Right ventricle myocardium inferior (tissue), 1 donor: ENCODE measurements at regions of chr17 and their contacts with region 1.

Region 1: DNA sequence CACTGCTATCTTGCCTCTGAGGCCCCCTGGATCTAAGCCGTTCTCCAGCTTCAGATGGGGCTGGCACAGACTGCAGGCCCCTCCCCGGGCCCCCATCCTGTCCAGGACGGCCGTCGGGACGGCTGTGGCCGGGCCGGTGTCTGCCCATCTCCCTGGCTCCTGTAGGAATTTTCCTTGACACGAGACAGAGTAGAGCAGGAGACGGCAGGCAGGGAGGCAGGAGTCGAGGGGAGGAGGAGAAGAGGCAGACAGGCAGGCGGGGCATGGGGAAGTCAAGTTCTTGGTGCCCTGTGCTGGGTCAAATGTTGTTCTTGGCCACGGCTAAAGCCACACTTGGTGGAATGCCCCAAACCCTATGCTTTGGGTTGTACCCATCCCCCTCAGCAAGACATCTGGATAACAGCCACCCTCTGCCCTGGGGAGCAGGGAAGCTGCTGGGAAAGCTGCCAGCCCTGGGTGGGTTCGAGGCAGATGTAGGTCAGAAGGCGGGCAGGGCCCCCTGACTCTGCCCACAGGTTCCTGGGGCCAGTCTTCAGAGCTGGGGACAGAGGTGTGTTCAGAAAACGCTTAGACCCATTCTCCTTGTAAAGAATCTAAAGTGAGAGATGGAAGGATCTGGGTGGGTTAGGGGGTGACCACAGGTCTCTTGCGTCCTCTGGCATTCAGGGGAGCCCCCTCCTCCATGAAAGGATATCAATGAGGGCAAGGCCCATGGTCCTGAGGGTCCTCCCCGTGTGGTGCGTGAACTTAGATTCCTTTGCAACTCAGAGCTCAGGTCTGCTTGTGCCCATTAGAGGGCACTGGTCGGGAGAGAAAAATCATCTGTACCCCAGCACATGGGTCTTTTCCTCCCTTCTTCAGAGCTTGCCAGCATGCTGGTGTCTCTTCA is 4.2 kb downstream of the C1QTNF1 start:
- DNase-seq: no peak
- ATAC-seq: no peak

Region 2: DNA sequence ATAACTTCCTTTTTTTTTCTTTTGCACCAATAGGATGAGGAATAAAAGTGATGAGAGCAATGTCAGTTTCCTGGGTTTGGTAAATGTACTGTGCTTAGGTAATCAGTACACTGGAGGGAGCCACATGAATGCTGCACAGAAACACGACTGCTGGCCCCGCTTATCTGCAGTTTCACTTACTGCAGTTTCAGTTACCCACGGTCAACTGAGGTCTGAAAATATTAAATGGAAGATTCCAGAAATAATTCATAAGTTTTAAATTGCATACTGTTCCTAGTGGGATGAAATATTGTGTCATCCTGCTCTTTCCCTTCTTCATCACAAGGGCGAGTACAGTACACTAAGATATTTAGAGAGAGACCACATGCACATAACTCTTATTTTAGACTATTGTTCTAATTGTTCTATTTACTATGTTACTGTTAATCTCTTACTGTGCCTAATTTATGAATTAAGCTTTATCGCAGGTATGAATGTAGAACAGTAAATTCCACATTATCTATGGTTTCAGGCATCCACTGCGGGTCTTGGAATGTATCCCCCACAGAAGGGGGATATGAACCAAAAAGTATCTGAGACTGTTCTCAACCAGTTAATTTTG is 42.0 kb before region 1 on chr17:
- intact Hi-C with region 1: loop called (anchors 2 kb)
- DNase-seq: peak; percentile 52
- ATAC-seq: peak; percentile 73

Region 3: DNA sequence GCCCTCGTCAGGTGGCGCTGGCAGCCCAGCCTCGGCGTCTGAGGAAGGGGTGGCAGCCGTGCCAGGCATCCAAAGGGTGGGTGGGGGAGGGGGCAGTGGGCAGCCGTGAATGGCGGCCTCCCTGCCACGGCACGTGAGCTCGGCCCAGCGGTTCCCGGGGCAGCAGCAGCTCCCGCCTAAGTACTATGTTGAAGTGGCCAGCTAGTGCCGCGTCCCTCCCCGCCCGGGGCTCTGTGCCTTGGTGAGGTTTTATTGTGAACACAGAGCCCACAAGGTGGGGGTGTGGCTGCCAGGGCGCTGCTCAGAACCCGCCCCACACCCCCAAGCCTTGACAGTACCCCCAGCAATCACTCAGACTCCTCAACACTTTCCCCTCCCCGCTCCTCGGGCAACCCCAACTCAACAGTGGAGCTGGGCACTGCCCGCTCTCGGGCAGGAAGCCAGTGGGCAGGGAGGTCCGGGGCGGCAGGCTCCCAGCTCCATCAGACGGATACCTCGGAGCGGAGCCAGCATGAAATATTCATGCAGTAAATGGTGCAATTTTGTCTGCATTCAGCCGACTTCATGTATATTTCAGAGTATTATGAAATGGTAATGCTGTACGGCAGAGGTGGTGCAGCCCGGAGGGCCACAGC is 126.9 kb after region 1 on chr17:
- intact Hi-C with region 1: no loop called
- DNase-seq: no peak
- ATAC-seq: no peak